ENCODE measurements at regions of chr18 and their contacts with region 1.

Region 1: DNA sequence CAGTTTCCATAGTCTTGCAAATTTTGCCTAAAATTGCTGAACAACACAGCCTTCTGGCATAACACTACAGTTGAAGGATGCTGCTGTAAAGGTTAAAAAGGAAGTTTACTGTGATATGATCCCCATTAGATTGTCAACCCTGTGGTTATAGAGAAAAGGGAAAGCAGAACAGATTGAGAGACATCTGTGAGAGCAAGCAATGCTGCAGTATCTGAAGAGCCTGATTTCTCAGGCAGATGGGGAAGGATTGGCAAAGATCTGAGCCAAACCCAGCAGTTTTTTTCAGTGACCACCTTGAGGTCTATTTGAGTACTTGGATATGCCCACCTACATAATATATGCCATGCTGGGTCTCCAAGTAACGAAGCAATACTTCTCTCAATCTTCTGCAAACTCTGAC is 8.5 kb upstream of the ST8SIA3 start:
- DNase-seq: no peak
- ATAC-seq: no peak
- H3K4me3 ChIP-seq: no peak overlapping the region
- H3K27ac ChIP-seq: no peak overlapping the region
- H3K4me1 ChIP-seq: no peaks in the 10 kb centered on the region
- H3K27me3 ChIP-seq: peaks cover 0 to 38% (median 0%) of the 10 kb centered on the region in 9 donors
- CTCF ChIP-seq: no peak
- POLR2A ChIP-seq: no peak

Region 2: DNA sequence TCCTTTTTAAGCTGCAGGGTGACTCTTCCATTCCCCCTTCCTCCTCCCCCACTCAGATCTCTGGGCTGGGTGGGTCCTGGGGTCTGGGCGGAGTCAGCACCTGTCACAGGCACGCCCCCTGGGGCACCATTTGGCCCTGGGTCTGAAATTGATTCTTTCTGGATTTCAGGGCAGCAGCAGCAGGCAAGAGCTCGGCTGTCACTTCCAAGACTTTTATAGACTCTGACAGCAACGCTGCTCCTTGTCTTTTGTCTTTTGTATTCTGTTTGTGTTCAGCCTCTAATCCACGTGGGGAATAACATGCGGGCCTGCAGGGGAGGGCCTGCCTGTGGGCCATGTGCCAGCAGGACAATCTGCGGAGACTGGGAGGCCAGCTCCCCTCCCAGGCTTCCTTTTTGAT is 193.0 kb before region 1 on chr18:
- intact Hi-C with region 1: no loop called
- DNase-seq: peak in 2 of 5 donors; percentile 14 to 38
- ATAC-seq: peak in 2 of 4 donors; percentile 30 to 41
- H3K4me3 ChIP-seq: no peak overlapping the region
- H3K27ac ChIP-seq: no peak overlapping the region
- H3K4me1 ChIP-seq: peaks cover 0 to 12% (median 0%) of the 10 kb centered on the region in 12 donors
- H3K27me3 ChIP-seq: peaks cover 0 to 19% (median 6%) of the 10 kb centered on the region in 9 donors
- CTCF ChIP-seq: no peak
- POLR2A ChIP-seq: no peak

Region 3: GRCh38 chr18:57376503-57376902 is 32.7 kb after region 1 on chr18:
- intact Hi-C with region 1: loop called in 1 of 10 experiments (anchors 5 kb)
- DNase-seq: no peak
- ATAC-seq: no peak
- H3K4me3 ChIP-seq: no peak overlapping the region
- H3K27ac ChIP-seq: no peak overlapping the region
- H3K4me1 ChIP-seq: no peaks in the 10 kb centered on the region
- H3K27me3 ChIP-seq: peaks cover 0 to 7% (median 0%) of the 10 kb centered on the region in 9 donors
- CTCF ChIP-seq: no peak
- POLR2A ChIP-seq: no peak

Region 4: GRCh38 chr18:57404345-57404744 is 60.5 kb after region 1 on chr18:
- intact Hi-C with region 1: loop called in 1 of 10 experiments (anchors 10 kb)
- DNase-seq: no peak
- ATAC-seq: no peak
- H3K4me3 ChIP-seq: no peak overlapping the region
- H3K27ac ChIP-seq: no peak overlapping the region
- H3K4me1 ChIP-seq: no peaks in the 10 kb centered on the region
- H3K27me3 ChIP-seq: peaks cover 0 to 36% (median 0%) of the 10 kb centered on the region in 9 donors
- CTCF ChIP-seq: no peak
- POLR2A ChIP-seq: no peak

Measured in heart left ventricle (tissue), 16 donors.